Activated CD8-positive, alpha-beta T cell treated with anti-CD3 and anti-CD28 coated beads for 36 hours (primary cell): ENCODE measurements at regions of chr7 and their contacts with region 1.

Region 1: GRCh38 chr7:50349963-50350944 is 45.7 kb downstream of the IKZF1 start:
- DNase-seq: peak; percentile 94
- ATAC-seq: peak; percentile 71
- H3K4me3 Mint-ChIP-seq: peak overlapping the region; percentile 42
- H3K27ac Mint-ChIP-seq: peak overlapping the region; percentile 95
- H3K4me1 Mint-ChIP-seq: peaks cover 96% of the 10 kb centered on the region
- H3K27me3 Mint-ChIP-seq: no peaks in the 10 kb centered on the region
- CTCF ChIP-seq: no peak

Region 2: GRCh38 chr7:50085344-50085743 is 264.9 kb before region 1 on chr7:
- CTCF ChIA-PET with region 1: no interaction called
- POLR2A ChIA-PET with region 1: no interaction called
- intact Hi-C with region 1: no loop called
- DNase-seq: no peak
- ATAC-seq: no peak
- H3K4me3 Mint-ChIP-seq: no peak overlapping the region
- H3K27ac Mint-ChIP-seq: no peak overlapping the region
- H3K4me1 Mint-ChIP-seq: peaks cover 4% of the 10 kb centered on the region
- H3K27me3 Mint-ChIP-seq: peaks cover 2% of the 10 kb centered on the region
- CTCF ChIP-seq: no peak

Region 3: GRCh38 chr7:50142425-50143017 is 207.7 kb before region 1 on chr7:
- CTCF ChIA-PET with region 1: interaction called, 11 read pairs
- POLR2A ChIA-PET with region 1: interaction called, 4 read pairs
- intact Hi-C with region 1: no loop called
- DNase-seq: peak; percentile 56
- ATAC-seq: peak; percentile 68
- H3K4me3 Mint-ChIP-seq: peak overlapping the region; percentile 50
- H3K27ac Mint-ChIP-seq: peak overlapping the region; percentile 87
- H3K4me1 Mint-ChIP-seq: peaks cover 43% of the 10 kb centered on the region
- H3K27me3 Mint-ChIP-seq: peaks cover 3% of the 10 kb centered on the region
- CTCF ChIP-seq: peak; percentile 89

Region 4: GRCh38 chr7:50266635-50267386 is 83.4 kb before region 1 on chr7:
- CTCF ChIA-PET with region 1: interaction called, 3 read pairs
- POLR2A ChIA-PET with region 1: interaction called, 9 read pairs
- intact Hi-C with region 1: loop called (anchors 5 kb)
- DNase-seq: peak; percentile 92
- ATAC-seq: peak; percentile 62
- H3K4me3 Mint-ChIP-seq: peak overlapping the region; percentile 63
- H3K27ac Mint-ChIP-seq: peak overlapping the region; percentile 92
- H3K4me1 Mint-ChIP-seq: peaks cover 93% of the 10 kb centered on the region
- H3K27me3 Mint-ChIP-seq: no peaks in the 10 kb centered on the region
- CTCF ChIP-seq: no peak

Region 5: DNA sequence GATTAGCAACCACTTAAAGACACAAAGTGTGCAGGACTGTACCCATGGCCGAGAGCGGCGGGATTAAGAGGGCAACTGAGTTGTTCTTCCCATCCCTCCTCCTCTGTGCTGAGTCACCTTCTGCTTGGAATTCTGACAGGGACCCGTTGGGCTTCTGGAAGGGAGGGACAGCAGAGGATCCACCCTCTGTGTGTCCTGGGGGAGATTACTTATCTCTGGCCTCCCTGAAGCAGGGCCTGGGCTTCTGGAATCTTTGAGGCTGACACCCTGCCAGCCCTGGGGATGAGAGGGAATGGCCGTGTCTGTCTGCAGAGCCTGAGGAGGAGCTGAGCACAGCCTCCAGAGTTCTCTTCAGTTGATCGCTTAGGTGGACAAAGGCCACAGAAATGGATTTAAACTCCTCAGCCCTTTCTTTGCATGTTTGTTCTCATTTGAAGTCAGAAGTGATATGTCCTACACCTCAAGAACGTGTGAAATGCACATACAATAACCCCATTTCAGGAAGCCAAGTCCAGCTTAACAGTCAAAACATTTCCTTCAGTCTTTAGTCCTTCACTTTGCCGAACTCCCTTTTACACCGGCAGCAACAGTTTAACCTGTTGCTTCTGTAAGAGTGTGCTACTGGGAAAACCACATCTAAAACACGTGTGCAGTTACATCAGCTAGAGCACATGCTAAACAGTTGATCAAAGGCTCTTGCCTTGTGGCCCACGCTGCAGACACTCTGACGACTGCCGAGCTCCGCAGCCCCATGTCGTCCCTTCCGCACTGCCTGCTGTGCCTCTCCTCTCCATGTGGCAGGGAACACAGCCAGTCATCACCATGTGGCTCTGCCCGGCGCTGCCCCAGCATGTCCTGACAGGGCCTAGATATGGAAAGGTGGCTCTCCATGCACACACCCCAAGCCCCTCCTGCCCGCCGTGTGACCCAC is 10.0 kb after region 1 on chr7:
- CTCF ChIA-PET with region 1: interaction called, 36 read pairs
- POLR2A ChIA-PET with region 1: interaction called, 1,027 read pairs
- intact Hi-C with region 1: loop called (anchors 1 kb)
- DNase-seq: peak; percentile 90
- ATAC-seq: peak; percentile 75
- H3K4me3 Mint-ChIP-seq: peak overlapping the region; percentile 69
- H3K27ac Mint-ChIP-seq: peak overlapping the region; percentile 99
- H3K4me1 Mint-ChIP-seq: peaks cover 93% of the 10 kb centered on the region
- H3K27me3 Mint-ChIP-seq: no peaks in the 10 kb centered on the region
- CTCF ChIP-seq: no peak

Region 6: DNA sequence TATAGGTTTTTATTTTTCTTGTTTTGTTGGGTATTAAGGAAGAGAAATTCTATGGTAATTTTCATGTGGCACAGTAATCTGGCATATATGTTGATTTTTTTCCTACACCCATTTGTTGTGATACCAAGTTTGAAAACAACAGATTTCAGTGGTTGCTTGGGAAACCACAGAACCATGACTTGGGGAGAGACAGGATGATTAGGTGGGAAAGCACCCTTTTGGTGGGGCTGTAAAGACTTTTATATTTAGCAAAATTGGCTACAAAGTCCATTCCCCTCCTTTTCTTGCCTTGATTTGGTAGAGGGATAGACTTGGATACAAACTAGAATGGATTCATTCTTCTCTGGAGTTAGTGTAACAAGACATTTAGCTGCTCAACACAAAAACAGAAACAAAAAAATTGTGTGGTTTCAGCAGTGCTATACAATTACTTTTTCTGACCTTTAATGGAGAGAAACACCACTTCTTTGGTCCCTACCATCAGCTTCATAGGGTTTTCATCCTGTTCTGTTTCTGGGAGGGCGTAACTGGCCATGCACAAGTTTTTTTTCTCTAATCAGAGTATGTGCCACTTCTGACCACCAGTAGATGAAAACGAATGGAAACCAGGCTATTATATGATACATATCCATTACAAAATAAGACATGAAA is 47.2 kb after region 1 on chr7:
- CTCF ChIA-PET with region 1: interaction called, 3 read pairs
- POLR2A ChIA-PET with region 1: interaction called, 14 read pairs
- intact Hi-C with region 1: no loop called
- DNase-seq: peak; percentile 69
- ATAC-seq: peak; percentile 16
- H3K4me3 Mint-ChIP-seq: no peak overlapping the region
- H3K27ac Mint-ChIP-seq: peak overlapping the region; percentile 88
- H3K4me1 Mint-ChIP-seq: peaks cover 81% of the 10 kb centered on the region
- H3K27me3 Mint-ChIP-seq: no peaks in the 10 kb centered on the region
- CTCF ChIP-seq: no peak

Region 7: DNA sequence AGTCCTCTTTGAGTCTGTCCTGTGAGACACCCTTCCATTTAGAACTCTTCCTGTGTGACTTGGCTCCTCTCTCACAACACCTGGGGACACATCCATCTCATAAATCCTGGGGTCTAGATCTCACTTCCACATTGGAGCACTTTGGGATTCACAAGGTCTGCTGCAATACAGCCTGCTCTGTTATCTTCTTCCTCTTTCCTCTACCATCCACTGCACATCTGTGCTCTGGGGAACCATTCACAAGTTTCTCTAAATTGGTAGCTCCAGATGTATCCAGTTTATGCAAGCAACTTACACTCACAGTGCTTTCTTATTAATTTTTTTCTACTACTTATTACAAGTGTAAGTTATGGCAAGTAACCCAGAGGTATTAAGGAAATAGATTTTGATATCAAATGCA is 105.4 kb after region 1 on chr7:
- CTCF ChIA-PET with region 1: no interaction called
- POLR2A ChIA-PET with region 1: no interaction called
- intact Hi-C with region 1: no loop called
- DNase-seq: no peak
- ATAC-seq: no peak
- H3K4me3 Mint-ChIP-seq: no peak overlapping the region
- H3K27ac Mint-ChIP-seq: no peak overlapping the region
- H3K4me1 Mint-ChIP-seq: peaks cover 5% of the 10 kb centered on the region
- H3K27me3 Mint-ChIP-seq: no peaks in the 10 kb centered on the region
- CTCF ChIP-seq: no peak